PC-9 (cell line): ENCODE measurements at regions of chr7 and their contacts with region 1.

Region 1: GRCh38 chr7:80346704-80347103 is 165.2 kb downstream of the GNAT3 start:
- DNase-seq: peak in 1 of 2 experiments; percentile 90
- H3K4me3 ChIP-seq: no peak overlapping the region
- H3K27ac ChIP-seq: peak overlapping the region; percentile 36; the same call in 1 of the 2 replicates
- H3K4me1 ChIP-seq: peaks cover 18% of the 10 kb centered on the region
- H3K27me3 ChIP-seq: no peaks in the 10 kb centered on the region
- CTCF ChIP-seq: no peak

Region 2: GRCh38 chr7:80263333-80263732 is 83.4 kb before region 1 on chr7:
- CTCF ChIA-PET with region 1: no interaction called
- POLR2A ChIA-PET with region 1: interaction called, 24 read pairs
- intact Hi-C with region 1: no loop called
- DNase-seq: no peak
- H3K4me3 ChIP-seq: no peak overlapping the region
- H3K27ac ChIP-seq: no peak overlapping the region
- H3K4me1 ChIP-seq: no peaks in the 10 kb centered on the region
- H3K27me3 ChIP-seq: no peaks in the 10 kb centered on the region
- CTCF ChIP-seq: no peak

Region 3: DNA sequence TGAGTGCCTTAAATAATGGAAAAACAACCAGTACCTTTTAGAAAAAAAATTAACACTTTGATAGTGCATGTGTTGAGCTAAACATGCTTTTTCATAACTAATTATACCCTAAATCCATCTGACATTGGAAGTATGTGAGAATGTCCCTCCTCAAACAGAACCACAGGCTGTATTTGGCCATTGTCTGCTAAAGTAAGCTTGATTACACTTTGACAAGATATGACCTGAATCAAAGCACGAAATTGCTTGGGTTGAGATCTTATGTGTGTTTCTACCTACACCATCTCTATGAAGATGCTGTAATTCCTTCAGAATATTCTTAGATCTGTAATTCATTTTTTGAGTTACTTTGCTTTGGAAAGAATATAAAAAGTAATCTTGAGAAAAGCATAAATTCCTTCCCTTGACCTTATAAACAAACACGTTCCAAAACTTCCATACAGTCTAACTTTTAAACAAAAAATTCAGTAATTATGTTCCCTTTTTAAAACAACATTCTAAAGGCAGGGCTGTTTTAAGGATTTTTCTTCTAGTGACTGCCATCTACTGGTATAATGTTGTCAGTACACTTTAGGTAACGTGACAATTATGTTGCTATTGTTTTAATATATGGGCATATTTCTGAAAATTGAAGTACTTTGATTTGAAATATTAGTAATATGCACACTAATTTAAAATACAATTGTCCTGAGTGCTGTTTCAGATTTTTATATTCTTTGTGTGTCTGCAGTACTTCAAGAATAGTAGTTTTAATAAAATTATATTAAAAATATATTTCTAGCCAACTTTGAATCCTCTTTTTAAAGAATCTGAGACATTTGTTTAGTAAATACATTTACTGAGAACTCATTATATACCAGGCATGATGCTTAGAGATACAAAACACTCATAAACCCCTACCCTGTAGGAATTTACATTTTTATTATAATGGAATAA is 312.7 kb after region 1 on chr7:
- CTCF ChIA-PET with region 1: no interaction called
- POLR2A ChIA-PET with region 1: no interaction called
- intact Hi-C with region 1: no loop called
- DNase-seq: no peak
- H3K4me3 ChIP-seq: no peak overlapping the region
- H3K27ac ChIP-seq: no peak overlapping the region
- H3K4me1 ChIP-seq: no peaks in the 10 kb centered on the region
- H3K27me3 ChIP-seq: no peaks in the 10 kb centered on the region
- CTCF ChIP-seq: peak; percentile 96

Region 4: GRCh38 chr7:80732630-80733029 is 385.9 kb after region 1 on chr7:
- CTCF ChIA-PET with region 1: no interaction called
- POLR2A ChIA-PET with region 1: no interaction called
- intact Hi-C with region 1: no loop called
- DNase-seq: no peak
- H3K4me3 ChIP-seq: no peak overlapping the region
- H3K27ac ChIP-seq: no peak overlapping the region
- H3K4me1 ChIP-seq: 0 out of 2 replicates have a peak, but pooled peaks cover 7% of the 10 kb centered on the region
- H3K27me3 ChIP-seq: no peaks in the 10 kb centered on the region
- CTCF ChIP-seq: peak; percentile 49; the same call in 1 of the 2 replicates

Region 5: GRCh38 chr7:81447351-81447952 is 1100.7 kb after region 1 on chr7:
- CTCF ChIA-PET with region 1: no interaction called
- POLR2A ChIA-PET with region 1: no interaction called
- intact Hi-C with region 1: no loop called
- DNase-seq: peak in 1 of 2 experiments; percentile 12
- H3K4me3 ChIP-seq: no peak overlapping the region
- H3K27ac ChIP-seq: no peak overlapping the region
- H3K4me1 ChIP-seq: no peaks in the 10 kb centered on the region
- H3K27me3 ChIP-seq: no peaks in the 10 kb centered on the region
- CTCF ChIP-seq: peak; percentile 64